PC-3 (cell line): ENCODE measurements at regions of chr5 and their contacts with region 1.

Region 1: DNA sequence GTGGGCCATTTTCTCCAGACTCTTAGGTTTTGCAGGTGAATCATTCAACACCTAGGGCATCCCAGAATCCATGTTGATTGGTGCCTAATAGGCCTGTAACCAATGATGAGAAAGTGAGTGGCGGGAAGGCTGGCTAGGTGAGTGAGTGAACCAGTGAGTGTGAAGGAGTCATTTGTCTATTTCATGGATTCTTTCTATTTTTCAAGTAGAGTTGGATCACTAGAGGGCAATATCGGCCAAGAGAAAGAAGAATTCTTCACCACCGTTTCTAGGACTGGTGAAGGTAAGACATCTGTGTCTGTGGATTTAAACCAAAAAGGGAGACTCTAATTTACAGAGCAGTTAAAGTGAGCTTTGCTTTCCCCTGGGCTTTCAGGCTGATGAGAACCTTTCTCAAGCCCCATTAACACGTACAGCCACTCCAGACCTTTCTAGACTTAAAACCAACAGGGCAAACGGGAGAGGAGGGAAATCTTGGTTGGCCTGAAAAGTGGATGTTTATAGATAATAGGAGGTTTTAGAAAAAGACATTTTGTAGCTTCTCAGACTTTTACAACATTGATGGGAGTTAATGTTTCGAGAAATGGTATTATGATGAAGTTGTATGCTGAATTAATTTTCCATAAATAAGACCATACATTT is 114.3 kb upstream of the IL12B start:
- DNase-seq: peak; percentile 78
- ATAC-seq: peak; percentile 76
- H3K4me3 ChIP-seq: no peak overlapping the region
- H3K27ac ChIP-seq: no peak overlapping the region
- H3K4me1 ChIP-seq: peaks cover 5% of the 10 kb centered on the region
- H3K27me3 ChIP-seq: no peaks in the 10 kb centered on the region
- CTCF ChIP-seq: peak; percentile 68

Region 2: DNA sequence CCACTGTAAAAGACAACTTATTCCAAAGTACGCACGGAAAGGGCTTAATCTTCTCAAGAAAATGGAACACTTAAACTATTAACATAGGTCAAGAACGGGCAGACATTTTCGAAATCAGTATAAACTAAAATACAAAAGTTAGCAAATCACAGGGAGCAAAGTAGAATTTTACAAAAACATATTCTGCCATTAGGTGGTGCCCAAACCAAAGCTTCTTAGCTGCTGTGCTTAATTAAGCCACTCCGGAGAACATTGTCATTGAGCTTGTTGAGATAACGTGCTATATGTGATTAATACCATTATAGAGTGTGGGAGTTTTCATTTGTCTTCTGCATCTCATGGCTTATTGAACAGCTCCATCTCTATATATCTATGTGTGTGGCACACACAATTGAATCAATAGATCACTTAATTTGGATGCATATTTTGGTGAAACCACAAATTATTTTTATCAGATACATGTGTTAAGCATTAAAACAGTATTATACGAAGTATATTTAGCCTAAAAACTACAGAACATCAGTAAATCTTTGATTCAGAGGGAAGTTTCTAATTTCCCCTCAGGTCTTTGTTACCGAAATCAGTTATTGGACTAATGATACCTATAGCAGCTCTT is 158.0 kb before region 1 on chr5:
- CTCF ChIA-PET with region 1: no interaction called
- POLR2A ChIA-PET with region 1: no interaction called
- intact Hi-C with region 1: loop called (anchors 5 kb)
- DNase-seq: peak; percentile 49
- ATAC-seq: no peak
- H3K4me3 ChIP-seq: no peak overlapping the region
- H3K27ac ChIP-seq: no peak overlapping the region
- H3K4me1 ChIP-seq: 0 out of 2 replicates have a peak, but pooled peaks cover 6% of the 10 kb centered on the region
- H3K27me3 ChIP-seq: no peaks in the 10 kb centered on the region
- CTCF ChIP-seq: peak; percentile 64

Region 3: DNA sequence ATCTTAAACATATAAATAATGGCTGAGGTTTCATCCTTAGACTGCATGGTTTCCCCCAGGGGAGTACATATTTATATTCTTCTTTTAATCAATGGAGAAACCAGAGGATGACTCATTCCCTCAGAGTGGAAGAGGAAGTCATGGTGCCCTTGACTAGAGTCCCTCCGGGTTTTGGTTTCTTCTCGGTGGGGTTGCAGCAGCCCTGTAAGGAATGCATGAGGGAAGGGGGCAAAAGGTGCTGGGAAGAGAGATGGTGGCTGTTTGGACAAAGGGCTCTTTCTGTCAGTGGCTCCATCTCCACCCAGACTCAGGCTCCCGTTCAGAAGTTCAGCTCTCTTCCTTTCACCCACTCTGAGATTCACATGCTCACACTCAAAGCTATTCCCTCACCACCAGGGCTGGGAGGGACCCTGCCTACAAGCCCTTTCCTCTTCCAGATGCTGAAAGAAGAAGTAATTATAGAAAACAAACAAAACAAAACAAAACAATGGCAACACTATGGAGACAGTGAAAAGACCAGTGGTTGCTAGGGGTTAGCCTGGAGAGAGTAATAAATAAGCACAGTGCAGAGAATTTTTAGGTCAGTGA is 15.5 kb after region 1 on chr5:
- CTCF ChIA-PET with region 1: no interaction called
- POLR2A ChIA-PET with region 1: no interaction called
- intact Hi-C with region 1: no loop called
- DNase-seq: peak; percentile 9
- ATAC-seq: no peak
- H3K4me3 ChIP-seq: no peak overlapping the region
- H3K27ac ChIP-seq: no peak overlapping the region
- H3K4me1 ChIP-seq: peaks cover 49% of the 10 kb centered on the region
- H3K27me3 ChIP-seq: no peaks in the 10 kb centered on the region
- CTCF ChIP-seq: no peak

Region 4: DNA sequence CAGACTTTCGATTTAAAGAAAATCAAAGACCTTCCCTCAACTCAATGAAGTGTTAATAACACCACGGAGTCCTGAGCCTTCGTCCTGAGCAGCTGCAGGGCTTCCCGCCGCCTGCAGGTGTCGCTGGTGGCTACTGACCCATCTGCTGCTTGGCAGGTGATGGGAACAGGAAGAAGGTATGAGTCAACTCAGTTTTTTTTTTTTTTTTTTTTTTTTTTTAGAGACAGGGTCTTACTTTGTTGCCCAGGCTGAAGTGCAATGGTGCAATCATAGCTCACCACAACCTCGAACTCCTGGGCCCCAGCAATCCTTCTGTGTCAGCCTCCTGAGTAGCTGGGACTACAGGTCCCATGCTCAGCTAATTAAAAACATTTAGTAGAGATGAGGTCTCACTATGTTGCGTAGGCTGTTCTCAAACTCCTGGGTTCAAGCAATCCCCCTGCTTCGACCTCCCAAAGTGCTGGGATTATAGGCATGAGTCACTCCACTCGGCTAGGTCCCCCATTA is 71.4 kb after region 1 on chr5:
- CTCF ChIA-PET with region 1: no interaction called
- POLR2A ChIA-PET with region 1: no interaction called
- intact Hi-C with region 1: loop called (anchors 5 kb)
- DNase-seq: peak; percentile 75
- ATAC-seq: no peak
- H3K4me3 ChIP-seq: no peak overlapping the region
- H3K27ac ChIP-seq: no peak overlapping the region
- H3K4me1 ChIP-seq: peaks cover 45% of the 10 kb centered on the region
- H3K27me3 ChIP-seq: no peaks in the 10 kb centered on the region
- CTCF ChIP-seq: peak; percentile 80

Region 5: DNA sequence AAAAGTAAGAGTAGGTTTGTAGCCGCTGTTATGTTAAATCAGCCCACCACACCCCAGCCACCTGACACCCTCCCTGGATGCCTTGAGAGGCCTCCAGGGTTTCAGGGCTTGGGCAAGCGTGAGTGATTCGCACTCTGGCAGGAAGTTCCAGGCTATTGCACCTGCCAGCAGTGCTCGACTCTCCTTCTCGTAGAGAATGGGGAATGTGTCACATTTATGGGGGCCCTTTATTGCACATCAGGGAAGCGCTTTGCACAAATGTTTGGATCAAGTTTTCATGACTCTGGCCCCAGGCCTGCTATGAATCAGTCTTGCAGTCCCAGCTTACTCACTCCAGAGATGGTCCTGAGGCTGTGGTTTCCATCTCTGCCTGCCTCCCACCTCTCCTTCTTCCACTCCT is 405.6 kb after region 1 on chr5:
- CTCF ChIA-PET with region 1: no interaction called
- POLR2A ChIA-PET with region 1: no interaction called
- intact Hi-C with region 1: loop called (anchors 1 kb)
- DNase-seq: peak; percentile 97
- ATAC-seq: peak; percentile 80
- H3K4me3 ChIP-seq: peak overlapping the region; percentile 46; the same call in 1 of the 2 replicates
- H3K27ac ChIP-seq: peak overlapping the region; percentile 96
- H3K4me1 ChIP-seq: peaks cover 26% of the 10 kb centered on the region
- H3K27me3 ChIP-seq: no peaks in the 10 kb centered on the region
- CTCF ChIP-seq: no peak

Region 6: GRCh38 chr5:159965031-159965837 is 520.7 kb after region 1 on chr5:
- CTCF ChIA-PET with region 1: no interaction called
- POLR2A ChIA-PET with region 1: no interaction called
- intact Hi-C with region 1: loop called (anchors 2 kb)
- DNase-seq: peak; percentile 69
- ATAC-seq: peak; percentile 90
- H3K4me3 ChIP-seq: no peak overlapping the region
- H3K27ac ChIP-seq: no peak overlapping the region
- H3K4me1 ChIP-seq: peaks cover 7% of the 10 kb centered on the region; the same call in 1 of the 2 replicates
- H3K27me3 ChIP-seq: no peaks in the 10 kb centered on the region
- CTCF ChIP-seq: peak; percentile 82